Posterior vena cava (tissue), 2 donors: ENCODE measurements at regions of chr15 and their contacts with region 1.

Region 1: DNA sequence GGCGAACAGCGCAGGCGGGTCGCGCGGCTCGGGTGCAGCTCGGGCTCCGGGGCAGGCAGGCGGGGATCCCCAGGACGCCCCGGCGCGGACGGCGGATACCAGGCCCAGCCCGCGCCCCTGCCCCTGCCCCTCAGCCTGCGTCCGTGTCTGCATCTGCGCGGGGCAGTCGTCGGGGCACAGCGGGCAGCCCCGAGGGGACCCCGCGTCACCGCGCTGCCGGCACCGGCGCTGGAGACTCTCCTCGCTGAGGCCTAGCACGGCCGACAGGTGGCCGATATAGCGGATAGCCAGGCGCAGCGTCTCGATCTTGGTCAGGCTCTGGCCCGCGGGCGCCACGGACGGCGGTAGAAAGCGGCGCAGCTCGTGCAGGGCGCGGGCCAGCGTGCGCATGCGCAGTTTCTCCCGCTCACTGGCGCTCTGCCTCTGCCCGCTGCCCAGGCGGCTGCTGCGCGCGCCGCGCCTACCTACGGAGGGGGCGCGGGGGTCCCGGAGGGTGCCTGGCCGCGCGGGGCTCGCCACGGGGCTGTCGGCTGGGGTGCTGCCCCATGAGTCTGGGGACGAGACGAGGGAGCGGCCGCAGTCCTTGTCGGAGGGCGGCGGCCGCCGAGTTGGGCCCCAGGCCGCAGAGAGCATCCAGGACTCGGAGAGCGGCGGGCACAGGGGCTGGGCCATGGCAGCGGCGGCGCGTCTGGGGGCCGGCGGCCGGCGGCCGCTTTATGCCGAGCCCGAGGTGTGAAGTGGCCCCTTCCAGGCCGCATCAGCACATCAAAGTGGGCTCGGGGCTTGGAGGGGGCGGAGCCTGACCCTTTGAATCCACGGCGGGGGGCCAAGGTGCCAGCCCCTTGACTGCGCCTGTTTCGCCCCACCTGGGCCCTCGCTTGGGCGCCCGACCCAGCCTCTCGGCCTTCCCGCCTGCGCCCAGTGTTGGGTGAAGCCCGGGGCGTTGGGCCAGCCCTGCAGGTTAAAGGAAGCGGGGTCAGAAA is at the start of gene MESP1:
- DNase-seq: peak; percentile 97
- total RNA-seq, gene MESP1: 0.52 to 0.69 TPM

Region 2: DNA sequence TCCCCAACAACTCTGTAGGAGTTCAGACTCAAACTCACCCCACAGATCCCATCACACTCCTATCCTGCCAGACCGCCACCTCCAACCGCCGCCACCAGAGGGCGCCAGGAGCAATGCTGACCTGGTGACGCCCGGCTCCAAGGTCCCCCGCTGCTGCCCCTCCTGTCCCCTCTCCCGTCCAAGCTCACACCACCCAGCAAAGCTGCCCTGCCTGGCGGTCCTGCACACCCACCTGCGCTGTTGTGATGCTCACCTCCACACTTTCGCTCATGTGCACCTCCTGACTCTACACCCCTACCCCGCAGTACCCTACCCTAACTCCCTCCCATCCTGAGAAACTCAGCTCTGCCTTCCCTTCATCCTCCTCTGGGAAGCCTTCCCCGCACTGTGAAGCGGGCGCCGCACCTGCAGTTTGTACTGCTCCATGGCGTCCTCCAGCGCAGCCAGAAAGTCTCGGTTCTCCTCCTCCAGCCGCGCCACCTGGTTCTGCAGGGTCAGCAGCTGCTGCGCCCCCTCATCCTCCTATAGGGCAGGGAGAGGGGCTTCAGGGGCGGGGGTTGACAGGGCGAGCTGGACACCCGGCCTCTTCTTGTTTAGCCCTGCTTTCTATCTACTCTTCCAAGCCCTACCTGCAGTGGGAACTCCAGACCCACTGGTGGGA is 103.5 kb before region 1 on chr15:
- intact Hi-C with region 1: loop called in 1 of 2 experiments (anchors 5 kb)
- DNase-seq: peak; percentile 94

Region 3: GRCh38 chr15:90233376-90234095 is 482.7 kb after region 1 on chr15 and contains the start of gene CIB1:
- intact Hi-C with region 1: loop called in 1 of 2 experiments (anchors 10 kb)
- DNase-seq: peak; percentile 99
- total RNA-seq, gene CIB1: 37.5 to 41.6 TPM

Region 4: DNA sequence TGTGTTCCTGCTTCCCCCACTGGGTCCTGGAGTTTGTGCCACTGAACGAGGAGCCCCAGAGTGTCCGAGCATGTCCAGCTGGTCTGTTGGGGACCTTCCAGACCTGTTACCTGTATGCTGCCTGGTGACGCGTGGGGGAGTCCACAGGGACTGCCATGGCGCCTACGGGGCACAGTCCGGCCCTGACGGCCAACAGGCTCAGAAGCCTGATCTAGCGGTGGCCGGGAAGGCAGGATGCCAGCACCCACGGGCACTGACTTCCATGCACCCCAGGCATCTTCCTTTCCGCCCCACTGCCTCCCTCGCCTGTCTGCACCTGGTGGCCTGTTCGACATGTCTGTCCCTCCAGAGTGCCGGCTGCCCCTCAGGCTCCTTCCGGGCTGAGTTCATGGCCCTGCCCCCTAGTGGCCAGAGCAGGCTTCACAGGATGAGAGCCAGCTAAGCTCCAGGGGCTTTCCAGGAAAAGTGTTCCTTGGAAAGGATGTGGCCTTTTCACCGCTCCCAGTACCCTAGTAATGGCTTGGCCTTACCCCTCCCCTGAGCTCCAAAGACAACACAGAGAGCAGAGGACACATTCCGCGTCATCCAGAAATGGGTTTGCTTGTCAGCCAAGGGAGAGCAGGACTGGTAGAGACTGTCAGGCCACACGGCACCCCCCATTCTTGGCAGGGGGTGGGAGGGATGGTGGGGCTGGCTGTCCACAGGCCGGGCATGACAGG is 550.3 kb after region 1 on chr15:
- intact Hi-C with region 1: no loop called
- DNase-seq: peak; percentile 90

Region 5: GRCh38 chr15:91099995-91100813 is 1349.4 kb after region 1 on chr15 and contains the start of gene SV2B:
- intact Hi-C with region 1: loop called in 1 of 2 experiments (anchors 5 kb)
- DNase-seq: no peak
- total RNA-seq, gene SV2B: 2.9 to 3.4 TPM